Activated CD4-positive, alpha-beta memory T cell treated with anti-CD3 and anti-CD28 coated beads for 36 hours (primary cell): ENCODE measurements at regions of chr3 and their contacts with region 1.

Region 1: DNA sequence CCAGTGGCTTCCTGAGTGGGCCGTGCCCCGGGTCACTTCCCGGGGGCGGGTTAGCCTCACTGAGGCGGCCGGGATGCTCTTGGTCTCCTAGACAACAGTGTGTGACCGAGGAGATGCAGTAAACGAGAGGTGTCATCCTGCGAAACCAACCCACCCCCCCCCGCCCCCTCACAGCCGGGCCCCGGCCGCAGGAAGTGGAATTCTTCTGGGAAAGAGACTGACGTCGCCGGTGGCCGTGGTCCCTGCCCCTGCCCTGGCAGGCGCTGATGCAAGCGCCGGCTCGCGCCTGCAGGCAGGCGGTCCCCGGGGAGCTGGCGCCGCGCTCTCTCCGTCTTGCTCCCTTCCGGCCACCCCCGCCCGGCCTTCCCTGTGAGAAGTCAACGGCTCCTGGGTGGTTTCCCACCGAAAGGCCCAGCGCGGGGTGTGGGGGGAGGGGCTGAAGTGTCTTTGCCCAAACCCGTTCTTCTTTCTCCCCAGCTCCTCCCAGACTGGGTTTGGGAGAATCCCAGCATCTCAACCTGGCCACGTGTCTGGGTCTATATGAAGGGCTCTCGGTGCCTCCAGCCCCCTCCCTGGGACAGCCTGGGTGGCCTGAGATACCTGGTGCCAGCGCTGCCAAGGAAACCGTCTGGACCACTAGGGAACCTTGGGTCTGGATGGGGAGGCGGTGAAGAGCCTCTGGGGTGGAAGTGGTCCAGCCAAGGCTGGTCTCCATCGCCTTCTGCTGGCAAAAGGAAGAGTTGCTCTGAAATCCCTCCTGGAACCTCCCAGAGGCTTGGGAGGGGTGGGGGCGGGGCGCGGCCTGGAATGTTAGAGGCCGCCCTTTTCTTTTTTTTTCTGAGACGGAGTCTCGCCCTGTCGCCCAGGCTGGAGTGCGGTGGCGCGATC is 47.3 kb downstream of the BHLHE40 start:
- DNase-seq: peak; percentile 84
- H3K4me3 Mint-ChIP-seq: peak overlapping the region; percentile 79
- H3K27ac Mint-ChIP-seq: peak overlapping the region; percentile 88
- H3K4me1 Mint-ChIP-seq: peaks cover 51% of the 10 kb centered on the region
- H3K27me3 Mint-ChIP-seq: no peaks in the 10 kb centered on the region

Region 2: GRCh38 chr3:4712143-4712542 is 314.4 kb before region 1 on chr3:
- CTCF ChIA-PET with region 1: interaction called, 42 read pairs
- POLR2A ChIA-PET with region 1: no interaction called
- intact Hi-C with region 1: no loop called
- DNase-seq: no peak
- H3K4me3 Mint-ChIP-seq: no peak overlapping the region
- H3K27ac Mint-ChIP-seq: no peak overlapping the region
- H3K4me1 Mint-ChIP-seq: peaks cover 1% of the 10 kb centered on the region
- H3K27me3 Mint-ChIP-seq: no peaks in the 10 kb centered on the region

Region 3: GRCh38 chr3:4834403-4834866 is 192.1 kb before region 1 on chr3:
- CTCF ChIA-PET with region 1: interaction called, 14 read pairs
- POLR2A ChIA-PET with region 1: interaction called, 3 read pairs
- intact Hi-C with region 1: loop called (anchors 1 kb)
- DNase-seq: peak; percentile 90
- H3K4me3 Mint-ChIP-seq: peak overlapping the region; percentile 49
- H3K27ac Mint-ChIP-seq: peak overlapping the region; percentile 84
- H3K4me1 Mint-ChIP-seq: peaks cover 86% of the 10 kb centered on the region
- H3K27me3 Mint-ChIP-seq: no peaks in the 10 kb centered on the region

Region 4: DNA sequence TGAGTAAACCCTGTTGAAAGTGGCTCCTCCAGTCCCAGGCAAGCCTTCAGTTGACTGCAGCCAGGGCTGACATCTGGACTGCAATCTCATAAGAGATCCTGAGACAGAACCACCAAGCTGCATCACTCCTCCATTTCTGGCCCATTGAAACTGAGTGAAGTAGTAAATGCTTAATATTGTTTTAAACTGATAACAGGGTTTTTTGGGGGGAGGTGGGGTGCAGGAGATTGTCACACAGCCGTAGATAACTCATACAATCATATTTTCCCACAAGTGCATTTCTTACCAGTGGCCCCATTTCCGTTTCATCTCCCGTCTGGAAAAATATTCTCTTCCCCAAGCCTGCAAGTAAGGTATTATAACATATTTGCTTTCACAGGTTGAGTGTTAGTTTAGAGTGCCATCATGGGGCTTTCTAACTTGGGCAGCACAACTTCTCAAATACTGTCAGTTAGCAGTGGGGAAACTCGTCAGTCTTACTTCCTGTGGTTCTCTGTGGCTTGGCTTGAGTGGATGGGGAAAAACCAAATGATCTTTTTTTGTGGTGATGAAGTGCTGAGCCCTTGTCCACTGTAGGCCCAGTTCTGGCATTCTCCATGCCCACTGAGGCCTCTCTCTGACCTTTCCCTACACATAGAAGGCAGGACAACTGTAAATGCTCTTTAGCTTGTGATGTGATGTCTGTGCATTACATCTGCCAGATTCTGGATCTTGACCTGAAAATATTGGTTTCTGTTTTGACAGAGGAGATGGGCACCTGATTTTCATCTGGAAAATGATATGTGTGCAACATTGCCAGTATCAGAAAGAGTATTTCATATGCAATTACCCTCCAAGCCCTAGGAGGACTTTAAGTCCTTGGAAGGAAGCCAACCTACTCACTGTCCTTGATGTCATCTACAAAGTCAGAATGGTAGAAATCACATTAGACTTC is 137.4 kb before region 1 on chr3:
- CTCF ChIA-PET with region 1: no interaction called
- POLR2A ChIA-PET with region 1: no interaction called
- intact Hi-C with region 1: loop called (anchors 1 kb)
- DNase-seq: peak; percentile 67
- H3K4me3 Mint-ChIP-seq: no peak overlapping the region
- H3K27ac Mint-ChIP-seq: peak overlapping the region; percentile 90
- H3K4me1 Mint-ChIP-seq: peaks cover 31% of the 10 kb centered on the region
- H3K27me3 Mint-ChIP-seq: no peaks in the 10 kb centered on the region

Region 5: DNA sequence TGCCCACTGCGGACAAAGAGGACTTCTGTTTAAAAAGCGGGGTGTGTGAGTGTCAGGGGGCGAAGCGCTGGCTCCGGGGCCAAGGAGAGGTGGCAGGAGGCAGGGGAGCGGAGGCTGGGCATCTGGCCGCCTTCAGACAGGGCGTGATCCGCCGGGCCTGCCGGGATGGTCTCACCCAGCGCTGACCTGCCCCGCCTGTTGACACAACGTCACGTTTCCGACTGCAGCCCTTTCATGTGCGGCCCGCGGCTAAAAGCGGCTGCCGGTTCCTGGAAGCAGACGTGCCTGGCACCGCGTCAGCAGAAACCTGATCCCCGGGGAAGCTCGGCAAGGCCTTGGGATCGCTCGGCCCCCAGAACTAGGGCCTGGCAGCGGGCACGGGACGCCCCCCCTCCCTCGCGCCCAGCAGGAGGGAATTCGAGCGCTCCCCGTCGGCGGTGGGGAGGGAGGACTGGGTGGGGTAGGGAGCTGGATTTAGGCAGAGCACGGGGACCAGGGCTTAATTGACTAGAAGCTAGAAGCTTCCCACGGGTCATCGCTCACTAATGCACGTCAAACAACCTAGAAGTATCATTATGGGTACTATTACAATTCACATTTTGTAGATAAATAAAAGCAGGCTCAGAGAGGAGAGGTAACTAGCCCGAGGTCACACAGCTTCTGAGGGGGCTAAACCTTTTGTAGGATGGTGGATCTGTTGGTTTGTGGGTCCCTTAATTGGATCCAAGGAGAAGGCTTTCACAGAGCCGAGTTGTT is 39.6 kb before region 1 on chr3:
- CTCF ChIA-PET with region 1: interaction called, 181 read pairs
- POLR2A ChIA-PET with region 1: interaction called, 263 read pairs
- intact Hi-C with region 1: loop called (anchors 1 kb)
- DNase-seq: peak; percentile 86
- H3K4me3 Mint-ChIP-seq: peak overlapping the region; percentile 77
- H3K27ac Mint-ChIP-seq: peak overlapping the region; percentile 87
- H3K4me1 Mint-ChIP-seq: peaks cover 60% of the 10 kb centered on the region
- H3K27me3 Mint-ChIP-seq: no peaks in the 10 kb centered on the region

Region 6: DNA sequence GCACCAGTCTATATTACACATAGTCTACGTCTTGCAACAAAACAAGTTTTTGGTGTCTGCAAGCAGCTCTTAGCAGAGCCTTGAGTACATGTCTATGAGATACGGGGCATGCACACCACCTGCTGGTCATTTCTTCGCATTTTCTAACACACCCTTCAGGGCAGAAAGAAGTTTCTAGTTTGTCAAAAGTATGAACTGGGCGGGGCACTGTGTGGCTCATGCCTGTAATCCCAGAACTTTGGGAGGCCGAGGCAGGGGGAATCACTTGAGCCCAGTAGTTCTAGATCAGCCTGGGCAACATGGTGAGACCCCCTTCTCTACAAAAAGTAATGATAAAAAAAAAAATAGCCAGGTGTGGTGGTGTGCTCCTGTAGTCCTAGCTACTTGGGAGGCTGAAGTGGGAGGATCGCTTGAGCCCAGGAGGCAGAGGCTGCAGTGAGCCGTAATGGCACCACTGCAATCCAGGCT is 31.3 kb after region 1 on chr3:
- CTCF ChIA-PET with region 1: interaction called, 5 read pairs
- POLR2A ChIA-PET with region 1: interaction called, 3 read pairs
- intact Hi-C with region 1: loop called (anchors 1 kb)
- DNase-seq: peak; percentile 87
- H3K4me3 Mint-ChIP-seq: no peak overlapping the region
- H3K27ac Mint-ChIP-seq: no peak overlapping the region
- H3K4me1 Mint-ChIP-seq: peaks cover 16% of the 10 kb centered on the region
- H3K27me3 Mint-ChIP-seq: peaks cover 8% of the 10 kb centered on the region